GM12878 (cell line): ENCODE measurements at regions of chr5 and their contacts with region 1.

Region 1: GRCh38 chr5:80308526-80308925 is 11.3 kb upstream of the SPZ1 start:
- DNase-seq: no peak
- ATAC-seq: no peak
- H3K4me3 ChIP-seq: no peak overlapping the region
- H3K27ac ChIP-seq: no peak overlapping the region
- H3K4me1 ChIP-seq: no peaks in the 10 kb centered on the region
- H3K27me3 ChIP-seq: no peaks in the 10 kb centered on the region; a peak in 1 of 4 replicates
- CTCF ChIP-seq: no peak
- EP300 ChIP-seq: no peak
- POLR2A ChIP-seq: no peak
- RAD21 ChIP-seq: no peak

Region 2: DNA sequence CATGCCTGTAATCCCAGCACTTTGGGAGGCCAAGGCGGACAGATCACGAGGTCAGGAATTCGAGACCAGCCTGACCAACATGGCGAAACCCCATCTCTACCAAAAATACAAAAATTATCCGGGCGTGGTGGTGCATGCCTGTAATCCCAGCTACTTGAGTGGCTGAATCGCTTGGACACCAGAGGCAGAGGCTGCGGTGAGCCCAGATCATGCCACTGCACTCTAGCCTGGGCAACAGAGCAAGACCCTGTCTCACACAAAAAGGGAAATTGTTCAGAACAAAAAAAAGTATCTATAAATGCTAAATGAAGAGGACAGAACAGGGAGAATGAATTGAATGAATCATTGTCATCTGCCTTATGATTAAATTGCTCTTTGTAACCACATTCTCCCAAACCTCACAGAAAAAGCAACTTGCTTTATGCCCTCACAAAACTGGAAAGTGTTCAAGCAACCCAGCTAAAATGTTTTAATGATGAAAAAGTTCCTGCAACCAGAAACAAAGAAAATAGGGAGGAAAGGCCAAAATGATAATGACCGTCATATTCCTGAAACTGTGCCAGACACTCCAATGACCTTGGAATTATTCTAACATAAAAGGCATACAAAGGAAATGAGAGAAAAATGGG is 136.3 kb before region 1 on chr5:
- CTCF ChIA-PET with region 1: no interaction called
- POLR2A ChIA-PET with region 1: no interaction called
- RAD21 ChIA-PET with region 1: no interaction called
- SMC1A ChIA-PET with region 1: no interaction called
- in situ Hi-C with region 1: no loop called
- intact Hi-C with region 1: no loop called
- DNase-seq: no peak
- ATAC-seq: no peak
- H3K4me3 ChIP-seq: no peak overlapping the region
- H3K27ac ChIP-seq: no peak overlapping the region
- H3K4me1 ChIP-seq: peaks cover 6% of the 10 kb centered on the region; the same call in 1 of the 2 replicates
- H3K27me3 ChIP-seq: no peaks in the 10 kb centered on the region
- CTCF ChIP-seq: no peak
- EP300 ChIP-seq: no peak
- POLR2A ChIP-seq: no peak
- RAD21 ChIP-seq: no peak

Region 3: GRCh38 chr5:80284720-80285119 is 23.8 kb before region 1 on chr5:
- CTCF ChIA-PET with region 1: interaction called, 6 read pairs
- POLR2A ChIA-PET with region 1: no interaction called
- RAD21 ChIA-PET with region 1: interaction called, 6 read pairs
- SMC1A ChIA-PET with region 1: interaction called, 10 read pairs
- in situ Hi-C with region 1: no loop called
- intact Hi-C with region 1: no loop called
- DNase-seq: no peak
- ATAC-seq: peak; percentile 74
- H3K4me3 ChIP-seq: no peak overlapping the region
- H3K27ac ChIP-seq: no peak overlapping the region
- H3K4me1 ChIP-seq: no peaks in the 10 kb centered on the region
- H3K27me3 ChIP-seq: no peaks in the 10 kb centered on the region
- CTCF ChIP-seq: no peak
- EP300 ChIP-seq: no peak
- POLR2A ChIP-seq: no peak
- RAD21 ChIP-seq: no peak

Region 4: DNA sequence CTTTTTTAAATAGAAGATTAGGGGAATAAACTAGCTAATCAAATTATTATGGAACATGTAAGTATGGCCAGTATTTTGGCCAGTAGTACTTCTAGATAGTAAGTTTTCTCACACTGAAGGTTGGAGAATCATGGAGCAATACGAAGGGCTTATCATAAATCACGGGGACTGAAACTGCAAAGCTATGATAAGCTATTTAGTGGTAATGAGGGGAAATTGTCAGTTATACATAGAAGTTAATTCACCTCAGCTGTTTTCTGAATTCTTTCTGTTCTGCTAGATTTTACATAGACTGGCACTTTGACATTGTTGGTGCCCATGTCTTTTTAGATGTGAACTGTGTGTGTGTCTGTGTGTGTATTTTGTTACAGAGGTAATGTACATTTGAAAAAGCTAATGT is 144.8 kb after region 1 on chr5:
- CTCF ChIA-PET with region 1: no interaction called
- POLR2A ChIA-PET with region 1: no interaction called
- RAD21 ChIA-PET with region 1: no interaction called
- SMC1A ChIA-PET with region 1: no interaction called
- in situ Hi-C with region 1: no loop called
- intact Hi-C with region 1: no loop called
- DNase-seq: no peak
- ATAC-seq: no peak
- H3K4me3 ChIP-seq: no peak overlapping the region
- H3K27ac ChIP-seq: no peak overlapping the region
- H3K4me1 ChIP-seq: no peaks in the 10 kb centered on the region
- H3K27me3 ChIP-seq: no peaks in the 10 kb centered on the region
- CTCF ChIP-seq: no peak
- EP300 ChIP-seq: no peak
- POLR2A ChIP-seq: no peak
- RAD21 ChIP-seq: no peak